CD4-positive, alpha-beta T cell (primary cell): ENCODE measurements at regions of chr19 and their contacts with region 1.

Region 1: GRCh38 chr19:9934132-9934950 is 2.0 kb downstream of the OLFM2 start:
- DNase-seq: peak; percentile 63 to 90 (median 76)
- ATAC-seq: peak; percentile 77
- H3K4me3 ChIP-seq: no peak overlapping the region
- H3K4me3 Mint-ChIP-seq: no peak overlapping the region
- H3K27ac ChIP-seq: no peak overlapping the region
- H3K27ac Mint-ChIP-seq: no peak overlapping the region
- H3K4me1 ChIP-seq: peaks cover 32% of the 10 kb centered on the region
- H3K4me1 Mint-ChIP-seq: peaks cover 33% of the 10 kb centered on the region
- H3K27me3 ChIP-seq: peaks cover 39 to 52% of the 10 kb centered on the region in 2 experiments
- H3K27me3 Mint-ChIP-seq: peaks cover 69% of the 10 kb centered on the region
- CTCF ChIP-seq: peak; percentile 80

Region 2: DNA sequence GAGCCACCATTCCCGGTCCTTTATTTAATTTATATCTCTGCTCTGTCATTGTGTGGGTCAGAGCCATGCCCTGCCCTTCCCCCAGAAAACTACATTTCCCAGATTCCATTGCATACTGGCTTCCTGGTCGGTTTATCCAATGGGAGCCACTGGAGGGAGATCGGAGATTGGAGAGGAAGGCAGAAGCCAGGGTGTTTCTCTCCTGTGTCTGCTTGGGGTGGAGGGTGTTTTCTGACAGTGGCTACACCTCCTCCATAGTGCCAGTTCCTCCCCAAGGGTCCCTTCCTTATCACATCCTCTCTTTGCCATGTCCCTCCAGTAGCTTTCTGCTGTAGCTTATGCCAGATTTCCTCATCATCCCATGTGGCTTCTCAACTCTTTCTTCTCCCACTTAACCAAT is 17.0 kb before region 1 on chr19:
- CTCF ChIA-PET with region 1: no interaction called
- POLR2A ChIA-PET with region 1: no interaction called
- intact Hi-C with region 1: no loop called
- DNase-seq: peak in 1 of 14 experiments; percentile 32
- ATAC-seq: no peak
- H3K4me3 ChIP-seq: no peak overlapping the region
- H3K4me3 Mint-ChIP-seq: no peak overlapping the region
- H3K27ac ChIP-seq: no peak overlapping the region
- H3K27ac Mint-ChIP-seq: no peak overlapping the region
- H3K4me1 ChIP-seq: peaks cover 17% of the 10 kb centered on the region
- H3K4me1 Mint-ChIP-seq: peaks cover 7% of the 10 kb centered on the region
- H3K27me3 ChIP-seq: peaks cover 8 to 21% of the 10 kb centered on the region in 2 experiments
- H3K27me3 Mint-ChIP-seq: peaks cover 40% of the 10 kb centered on the region
- CTCF ChIP-seq: no peak

Region 3: GRCh38 chr19:10000171-10000826 is 66.0 kb after region 1 on chr19:
- CTCF ChIA-PET with region 1: interaction called, 15 read pairs
- POLR2A ChIA-PET with region 1: no interaction called
- intact Hi-C with region 1: loop called in 1 of 2 experiments (anchors 2 kb)
- DNase-seq: peak; percentile 45 to 84 (median 56)
- ATAC-seq: peak; percentile 43
- H3K4me3 ChIP-seq: no peak overlapping the region
- H3K4me3 Mint-ChIP-seq: no peak overlapping the region
- H3K27ac ChIP-seq: no peak overlapping the region
- H3K27ac Mint-ChIP-seq: no peak overlapping the region
- H3K4me1 ChIP-seq: peaks cover 29% of the 10 kb centered on the region
- H3K4me1 Mint-ChIP-seq: peaks cover 5% of the 10 kb centered on the region
- H3K27me3 ChIP-seq: peaks cover 9 to 11% of the 10 kb centered on the region in 2 experiments
- H3K27me3 Mint-ChIP-seq: peaks cover 38% of the 10 kb centered on the region
- CTCF ChIP-seq: peak; percentile 75

Region 4: GRCh38 chr19:10027158-10027693 is 92.9 kb after region 1 on chr19:
- CTCF ChIA-PET with region 1: interaction called, 25 read pairs
- POLR2A ChIA-PET with region 1: interaction called, 5 read pairs
- intact Hi-C with region 1: loop called (anchors 1 kb)
- DNase-seq: no peak
- ATAC-seq: no peak
- H3K4me3 ChIP-seq: no peak overlapping the region
- H3K4me3 Mint-ChIP-seq: no peak overlapping the region
- H3K27ac ChIP-seq: no peak overlapping the region
- H3K27ac Mint-ChIP-seq: no peak overlapping the region
- H3K4me1 ChIP-seq: peaks cover 8% of the 10 kb centered on the region
- H3K4me1 Mint-ChIP-seq: no peaks in the 10 kb centered on the region
- H3K27me3 ChIP-seq: peaks cover 5 to 14% of the 10 kb centered on the region in 2 experiments
- H3K27me3 Mint-ChIP-seq: peaks cover 8% of the 10 kb centered on the region
- CTCF ChIP-seq: no peak

Region 5: GRCh38 chr19:10112895-10113591 is 178.7 kb after region 1 on chr19:
- CTCF ChIA-PET with region 1: interaction called, 3 read pairs
- POLR2A ChIA-PET with region 1: no interaction called
- intact Hi-C with region 1: loop called (anchors 2 to 5 kb)
- DNase-seq: peak; percentile 43 to 83 (median 62)
- ATAC-seq: peak; percentile 41
- H3K4me3 ChIP-seq: no peak overlapping the region
- H3K4me3 Mint-ChIP-seq: peak overlapping the region; percentile 87
- H3K27ac ChIP-seq: peak overlapping the region; percentile 47 to 63
- H3K27ac Mint-ChIP-seq: peak overlapping the region; percentile 98
- H3K4me1 ChIP-seq: peaks cover 80% of the 10 kb centered on the region
- H3K4me1 Mint-ChIP-seq: peaks cover 32% of the 10 kb centered on the region
- H3K27me3 ChIP-seq: no peaks in the 10 kb centered on the region
- H3K27me3 Mint-ChIP-seq: peaks cover 4% of the 10 kb centered on the region
- CTCF ChIP-seq: peak; percentile 59

Region 6: GRCh38 chr19:10388957-10389356 is 454.6 kb after region 1 on chr19:
- CTCF ChIA-PET with region 1: interaction called, 12 read pairs
- POLR2A ChIA-PET with region 1: no interaction called
- intact Hi-C with region 1: loop called (anchors 1 kb)
- DNase-seq: peak; percentile 72 to 94 (median 82)
- ATAC-seq: peak; percentile 62
- H3K4me3 ChIP-seq: no peak overlapping the region
- H3K4me3 Mint-ChIP-seq: no peak overlapping the region
- H3K27ac ChIP-seq: no peak overlapping the region
- H3K27ac Mint-ChIP-seq: no peak overlapping the region
- H3K4me1 ChIP-seq: peaks cover 7% of the 10 kb centered on the region
- H3K4me1 Mint-ChIP-seq: peaks cover 4% of the 10 kb centered on the region
- H3K27me3 ChIP-seq: no peaks in the 10 kb centered on the region
- H3K27me3 Mint-ChIP-seq: no peaks in the 10 kb centered on the region
- CTCF ChIP-seq: peak; percentile 96

Region 7: GRCh38 chr19:10439588-10439987 is 505.2 kb after region 1 on chr19:
- CTCF ChIA-PET with region 1: no interaction called
- POLR2A ChIA-PET with region 1: no interaction called
- intact Hi-C with region 1: loop called in 1 of 2 experiments (anchors 5 kb)
- DNase-seq: no peak
- ATAC-seq: no peak
- H3K4me3 ChIP-seq: no peak overlapping the region
- H3K4me3 Mint-ChIP-seq: no peak overlapping the region
- H3K27ac ChIP-seq: no peak overlapping the region
- H3K27ac Mint-ChIP-seq: no peak overlapping the region
- H3K4me1 ChIP-seq: peaks cover 6% of the 10 kb centered on the region
- H3K4me1 Mint-ChIP-seq: no peaks in the 10 kb centered on the region
- H3K27me3 ChIP-seq: no peaks in the 10 kb centered on the region
- H3K27me3 Mint-ChIP-seq: no peaks in the 10 kb centered on the region
- CTCF ChIP-seq: no peak